Adrenal gland (tissue), 19 donors: ENCODE measurements at regions of chr18 and their contacts with region 1.

Region 1: DNA sequence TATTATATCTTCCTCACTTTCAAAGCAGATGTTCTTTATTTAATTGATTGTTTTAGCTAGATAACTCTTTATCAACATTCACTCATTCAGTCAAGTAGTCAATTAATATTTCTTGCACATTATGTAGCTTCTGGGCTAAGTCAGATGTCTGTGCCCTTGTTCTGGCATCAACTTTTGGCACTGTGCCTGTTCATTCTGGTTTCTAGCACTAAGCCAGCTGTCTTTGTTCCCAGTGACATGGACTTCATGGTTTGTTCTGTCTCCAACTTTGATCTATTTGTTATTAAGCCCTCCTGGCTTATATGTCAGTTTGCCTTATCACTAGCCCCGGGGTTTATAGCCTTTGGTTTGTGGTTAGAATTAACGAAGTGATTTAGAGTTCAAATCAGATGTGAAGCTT is 247.9 kb upstream of the SYT4 start:
- DNase-seq: no peak
- H3K4me3 ChIP-seq: no peak overlapping the region
- H3K27ac ChIP-seq: no peak overlapping the region
- H3K4me1 ChIP-seq: no peaks in the 10 kb centered on the region
- H3K27me3 ChIP-seq: no peaks in the 10 kb centered on the region
- CTCF ChIP-seq: no peak
- POLR2A ChIP-seq: no peak

Region 2: DNA sequence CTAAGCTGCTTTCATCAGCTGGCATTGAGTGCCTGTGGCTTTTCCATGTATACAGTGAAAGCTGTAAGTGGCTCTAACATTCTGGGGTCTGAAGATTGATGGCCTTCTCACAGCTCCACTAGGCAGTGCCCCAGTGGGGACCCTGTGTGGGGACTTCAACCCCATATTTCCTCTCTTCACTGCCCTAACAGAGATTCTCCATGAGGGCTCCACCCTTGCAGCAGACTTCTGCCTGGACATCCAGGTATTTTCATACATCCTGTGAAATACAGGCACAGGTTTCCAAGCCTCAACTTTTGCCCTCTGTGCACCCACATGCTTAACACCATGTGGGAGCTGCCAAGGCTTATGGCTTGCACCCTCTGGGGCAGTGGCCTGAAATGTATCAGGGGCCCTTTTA is 59.7 kb before region 1 on chr18:
- intact Hi-C with region 1: loop called in 1 of 2 experiments (anchors 10 kb)
- DNase-seq: no peak
- H3K4me3 ChIP-seq: no peak overlapping the region
- H3K27ac ChIP-seq: no peak overlapping the region
- H3K4me1 ChIP-seq: no peaks in the 10 kb centered on the region
- H3K27me3 ChIP-seq: no peaks in the 10 kb centered on the region
- CTCF ChIP-seq: no peak
- POLR2A ChIP-seq: no peak